Natural killer cell (primary cell): ENCODE measurements at regions of chr16 and their contacts with region 1.

Region 1: GRCh38 chr16:85595812-85596502 is 17.2 kb upstream of the GSE1 start:
- DNase-seq: no peak
- ATAC-seq: no peak
- H3K4me3 ChIP-seq: no peak overlapping the region
- H3K4me3 Mint-ChIP-seq: no peak overlapping the region
- H3K27ac ChIP-seq: no peak overlapping the region
- H3K27ac Mint-ChIP-seq: peak overlapping the region; percentile 69 to 74
- H3K4me1 ChIP-seq: peaks cover 28% of the 10 kb centered on the region
- H3K4me1 Mint-ChIP-seq: peaks cover 38 to 82% of the 10 kb centered on the region in 2 donors
- H3K27me3 ChIP-seq: no peaks in the 10 kb centered on the region
- H3K27me3 Mint-ChIP-seq: no peaks in the 10 kb centered on the region
- CTCF ChIP-seq: no peak

Region 2: GRCh38 chr16:85004559-85005205 is 591.3 kb before region 1 on chr16:
- intact Hi-C with region 1: no loop called
- DNase-seq: no peak
- ATAC-seq: no peak
- H3K4me3 ChIP-seq: no peak overlapping the region
- H3K4me3 Mint-ChIP-seq: no peak overlapping the region
- H3K27ac ChIP-seq: no peak overlapping the region
- H3K27ac Mint-ChIP-seq: peak overlapping the region in 1 of 2 donors; percentile 43
- H3K4me1 ChIP-seq: peaks cover 28% of the 10 kb centered on the region
- H3K4me1 Mint-ChIP-seq: peaks cover 52 to 66% of the 10 kb centered on the region in 2 donors
- H3K27me3 ChIP-seq: no peaks in the 10 kb centered on the region
- H3K27me3 Mint-ChIP-seq: no peaks in the 10 kb centered on the region
- CTCF ChIP-seq: no peak

Region 3: DNA sequence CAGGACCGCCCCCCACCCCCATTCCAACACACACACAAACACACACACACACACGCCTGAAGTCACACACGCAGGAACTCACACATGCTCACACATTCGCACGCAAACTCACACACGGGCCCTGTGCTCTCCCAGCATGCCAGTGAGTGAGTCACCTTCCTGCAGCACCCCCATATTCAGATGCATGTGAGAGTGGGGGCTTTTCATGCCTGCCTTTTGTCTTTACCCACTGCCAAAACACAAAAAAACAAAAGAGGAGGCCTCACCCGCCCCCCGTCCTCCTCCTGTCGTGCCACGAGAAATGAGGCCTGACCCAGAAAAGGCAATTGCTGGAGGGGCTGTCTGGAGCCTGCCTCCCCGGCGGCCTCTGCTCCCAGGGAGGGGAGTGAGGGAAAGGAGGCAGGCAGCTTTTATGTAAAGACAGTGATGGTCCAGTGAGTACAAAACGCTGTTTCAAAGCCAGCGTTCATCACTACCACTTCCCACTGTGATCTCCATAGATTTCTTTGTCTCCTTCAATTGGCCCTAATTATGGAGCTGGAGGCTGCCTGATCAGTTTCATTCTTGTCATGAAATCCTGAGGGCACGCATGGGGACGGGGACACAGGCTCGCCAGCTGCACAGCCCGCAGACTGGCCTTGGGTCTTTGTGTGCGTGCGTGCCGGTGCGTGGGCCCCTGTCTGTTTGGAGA is 12.3 kb before region 1 on chr16:
- intact Hi-C with region 1: loop called (anchors 2 kb)
- DNase-seq: peak in 1 of 2 donors; percentile 44
- ATAC-seq: peak; percentile 66 to 85 (median 70)
- H3K4me3 ChIP-seq: no peak overlapping the region
- H3K4me3 Mint-ChIP-seq: peak overlapping the region; percentile 47
- H3K27ac ChIP-seq: no peak overlapping the region
- H3K27ac Mint-ChIP-seq: peak overlapping the region; percentile 66 to 85
- H3K4me1 ChIP-seq: peaks cover 88% of the 10 kb centered on the region
- H3K4me1 Mint-ChIP-seq: peaks cover 57 to 84% of the 10 kb centered on the region in 2 donors
- H3K27me3 ChIP-seq: no peaks in the 10 kb centered on the region
- H3K27me3 Mint-ChIP-seq: no peaks in the 10 kb centered on the region
- CTCF ChIP-seq: no peak

Region 4: GRCh38 chr16:85634747-85635544 is 39.0 kb after region 1 on chr16:
- intact Hi-C with region 1: no loop called
- DNase-seq: no peak
- ATAC-seq: no peak
- H3K4me3 ChIP-seq: no peak overlapping the region
- H3K4me3 Mint-ChIP-seq: no peak overlapping the region
- H3K27ac ChIP-seq: no peak overlapping the region
- H3K27ac Mint-ChIP-seq: peak overlapping the region in 1 of 2 donors; percentile 18
- H3K4me1 ChIP-seq: peaks cover 52% of the 10 kb centered on the region
- H3K4me1 Mint-ChIP-seq: peaks cover 14 to 50% of the 10 kb centered on the region in 2 donors
- H3K27me3 ChIP-seq: no peaks in the 10 kb centered on the region
- H3K27me3 Mint-ChIP-seq: no peaks in the 10 kb centered on the region
- CTCF ChIP-seq: no peak